ENCODE measurements at regions of chr15 and their contacts with region 1.

Region 1: GRCh38 chr15:90362936-90363212 is 10.8 kb downstream of the ZNF774 start:
- DNase-seq: peak in 1 of 2 donors; percentile 37
- ATAC-seq: peak; percentile 63 to 69
- H3K4me3 ChIP-seq: no peak overlapping the region
- H3K27ac ChIP-seq: peak overlapping the region; percentile 78 to 87 (median 82)
- H3K4me1 ChIP-seq: peaks cover 16 to 24% of the 10 kb centered on the region in 2 donors
- H3K27me3 ChIP-seq: no peaks in the 10 kb centered on the region
- CTCF ChIP-seq: no peak
- POLR2A ChIP-seq: no peak

Region 2: DNA sequence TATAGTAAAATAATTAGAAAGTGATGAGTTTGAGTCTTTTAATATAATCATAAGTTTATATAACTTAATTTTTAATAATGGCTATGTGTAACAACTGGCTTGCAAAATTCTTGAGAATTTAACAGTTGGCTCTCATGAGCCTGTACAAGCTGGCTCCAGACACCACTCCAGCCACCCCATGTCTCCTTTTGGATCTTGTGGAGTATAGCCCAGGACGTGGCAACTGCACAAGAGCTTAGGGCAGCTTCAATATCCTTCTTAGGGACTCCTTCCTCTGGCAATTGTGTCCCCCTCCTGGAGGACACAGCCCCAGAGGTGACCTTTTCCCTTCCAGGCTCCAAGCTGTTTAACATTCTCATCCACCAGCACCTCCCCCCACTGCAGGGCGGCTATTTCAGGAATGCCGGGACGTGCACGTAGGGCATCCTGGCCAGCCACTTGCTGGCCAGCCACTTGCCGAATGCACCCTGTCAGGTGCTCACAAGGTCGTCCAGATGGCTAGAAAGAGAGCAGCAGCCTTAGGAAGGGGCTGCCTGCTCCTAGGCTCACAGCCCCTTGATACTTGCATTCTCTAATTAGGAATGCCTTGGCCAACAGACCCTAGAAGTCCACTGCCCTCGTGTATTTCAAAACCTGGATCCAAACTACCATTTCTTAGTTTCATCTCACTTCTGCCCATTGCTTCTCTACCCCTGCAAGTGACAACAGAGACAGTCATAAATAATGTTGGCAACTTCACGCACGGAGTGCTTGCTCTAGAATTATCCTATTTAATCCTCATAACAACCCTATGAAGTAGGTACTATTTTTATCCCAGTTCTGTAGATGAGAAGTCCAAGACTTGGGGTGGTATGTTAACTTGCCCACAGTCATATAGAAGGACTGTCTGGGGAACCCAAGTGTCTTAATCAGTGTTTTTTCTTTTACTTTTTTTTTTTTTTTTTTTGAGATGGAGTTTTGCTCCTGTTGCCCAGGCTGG is 236.1 kb before region 1 on chr15:
- in situ Hi-C with region 1: no loop called
- intact Hi-C with region 1: no loop called
- DNase-seq: peak; percentile 10 to 78
- ATAC-seq: peak; percentile 92
- H3K4me3 ChIP-seq: no peak overlapping the region
- H3K27ac ChIP-seq: peak overlapping the region; percentile 68 to 81 (median 74)
- H3K4me1 ChIP-seq: peaks cover 8 to 18% of the 10 kb centered on the region in 2 donors
- H3K27me3 ChIP-seq: no peaks in the 10 kb centered on the region
- CTCF ChIP-seq: no peak
- POLR2A ChIP-seq: no peak

Region 3: GRCh38 chr15:90387537-90388461 is 24.9 kb after region 1 on chr15 and contains the start of gene IQGAP1:
- in situ Hi-C with region 1: no loop called
- intact Hi-C with region 1: loop called (anchors 1 kb)
- DNase-seq: peak; percentile 98
- ATAC-seq: peak; percentile 85 to 90
- H3K4me3 ChIP-seq: peak within 1 kb of the TSS; percentile 74 to 89 (median 78)
- H3K27ac ChIP-seq: peak within 1 kb of the TSS; percentile 91 to 100 (median 96)
- H3K4me1 ChIP-seq: peaks cover 37 to 40% of the 10 kb centered on the region in 2 donors
- H3K27me3 ChIP-seq: no peaks in the 10 kb centered on the region
- CTCF ChIP-seq: no peak
- POLR2A ChIP-seq: peak; percentile 89 to 93
- total RNA-seq, gene IQGAP1: 39.1 to 92.7 (median 59.1) TPM

Region 4: GRCh38 chr15:90419738-90420406 is 57.0 kb after region 1 on chr15:
- in situ Hi-C with region 1: no loop called
- intact Hi-C with region 1: loop called (anchors 5 kb)
- DNase-seq: peak; percentile 62 to 64
- ATAC-seq: peak; percentile 84 to 92
- H3K4me3 ChIP-seq: peak overlapping the region in 2 of 4 donors; percentile 9 to 16
- H3K27ac ChIP-seq: peak overlapping the region; percentile 85 to 96 (median 92)
- H3K4me1 ChIP-seq: peaks cover 75% of the 10 kb centered on the region in 2 donors
- H3K27me3 ChIP-seq: no peaks in the 10 kb centered on the region
- CTCF ChIP-seq: no peak
- POLR2A ChIP-seq: peak; percentile 9 to 68

Region 5: GRCh38 chr15:90463381-90463780 is 100.5 kb after region 1 on chr15:
- in situ Hi-C with region 1: no loop called
- intact Hi-C with region 1: loop called (anchors 5 kb)
- DNase-seq: peak; percentile 44 to 57
- ATAC-seq: peak; percentile 91 to 92
- H3K4me3 ChIP-seq: peak overlapping the region in 1 of 4 donors; percentile 3
- H3K27ac ChIP-seq: peak overlapping the region; percentile 84 to 89 (median 86)
- H3K4me1 ChIP-seq: peaks cover 65 to 70% of the 10 kb centered on the region in 2 donors
- H3K27me3 ChIP-seq: no peaks in the 10 kb centered on the region
- CTCF ChIP-seq: peak; percentile 19 to 54 (median 43)
- POLR2A ChIP-seq: peak in 1 of 2 donors; percentile 54

Region 6: DNA sequence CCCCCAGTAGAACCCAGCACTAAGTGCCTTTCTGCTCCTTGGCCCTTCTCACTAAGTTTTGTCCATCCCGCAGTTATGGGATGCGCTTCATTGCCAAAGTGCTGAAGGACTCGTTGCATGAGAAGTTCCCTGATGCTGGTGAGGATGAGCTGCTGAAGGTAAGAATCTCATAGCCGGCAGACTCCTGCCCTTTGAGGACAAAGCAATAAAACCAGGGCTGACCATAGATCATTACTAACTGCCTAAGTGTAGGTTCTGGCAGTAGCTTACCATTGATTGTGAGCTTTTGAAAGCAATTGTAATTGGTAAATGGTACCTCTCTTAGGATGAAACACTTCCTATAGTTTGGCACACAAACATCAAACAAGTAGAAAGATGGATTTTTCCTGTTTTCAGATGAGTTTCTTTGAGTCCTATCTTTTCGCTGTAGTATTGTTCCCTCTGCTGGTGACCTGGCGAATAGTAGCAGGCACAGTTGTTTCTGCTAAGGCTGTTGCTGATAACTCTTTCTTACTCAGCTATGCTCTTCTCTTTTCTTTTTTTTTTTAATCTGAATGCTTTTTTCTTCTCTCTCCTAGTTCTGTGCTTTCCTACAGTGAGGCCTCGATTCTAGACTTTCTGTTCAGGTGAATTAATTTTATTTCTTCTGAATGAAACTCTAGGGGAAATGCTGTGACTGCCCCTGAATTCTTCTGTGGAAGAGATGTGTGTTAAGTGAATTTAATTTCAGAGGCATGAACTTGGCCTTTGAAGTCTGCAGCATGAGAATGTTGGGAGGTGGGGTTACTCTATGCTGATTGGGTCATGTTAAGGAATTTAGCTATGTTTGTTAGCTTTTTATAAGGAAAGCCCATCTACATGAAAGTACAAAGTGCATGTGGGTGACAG is 119.5 kb after region 1 on chr15:
- in situ Hi-C with region 1: loop called in 3 of 4 experiments (anchors 10 kb)
- intact Hi-C with region 1: loop called (anchors 2 kb)
- DNase-seq: no peak
- ATAC-seq: peak in 1 of 2 donors; percentile 35
- H3K4me3 ChIP-seq: no peak overlapping the region
- H3K27ac ChIP-seq: peak overlapping the region in 2 of 4 donors; percentile 11 to 44
- H3K4me1 ChIP-seq: no peaks in the 10 kb centered on the region
- H3K27me3 ChIP-seq: no peaks in the 10 kb centered on the region
- CTCF ChIP-seq: peak; percentile 57 to 75 (median 60)
- POLR2A ChIP-seq: no peak